Sciatic nerve (tissue), 2 donors: ENCODE measurements at regions of chr19 and their contacts with region 1.

Region 1: DNA sequence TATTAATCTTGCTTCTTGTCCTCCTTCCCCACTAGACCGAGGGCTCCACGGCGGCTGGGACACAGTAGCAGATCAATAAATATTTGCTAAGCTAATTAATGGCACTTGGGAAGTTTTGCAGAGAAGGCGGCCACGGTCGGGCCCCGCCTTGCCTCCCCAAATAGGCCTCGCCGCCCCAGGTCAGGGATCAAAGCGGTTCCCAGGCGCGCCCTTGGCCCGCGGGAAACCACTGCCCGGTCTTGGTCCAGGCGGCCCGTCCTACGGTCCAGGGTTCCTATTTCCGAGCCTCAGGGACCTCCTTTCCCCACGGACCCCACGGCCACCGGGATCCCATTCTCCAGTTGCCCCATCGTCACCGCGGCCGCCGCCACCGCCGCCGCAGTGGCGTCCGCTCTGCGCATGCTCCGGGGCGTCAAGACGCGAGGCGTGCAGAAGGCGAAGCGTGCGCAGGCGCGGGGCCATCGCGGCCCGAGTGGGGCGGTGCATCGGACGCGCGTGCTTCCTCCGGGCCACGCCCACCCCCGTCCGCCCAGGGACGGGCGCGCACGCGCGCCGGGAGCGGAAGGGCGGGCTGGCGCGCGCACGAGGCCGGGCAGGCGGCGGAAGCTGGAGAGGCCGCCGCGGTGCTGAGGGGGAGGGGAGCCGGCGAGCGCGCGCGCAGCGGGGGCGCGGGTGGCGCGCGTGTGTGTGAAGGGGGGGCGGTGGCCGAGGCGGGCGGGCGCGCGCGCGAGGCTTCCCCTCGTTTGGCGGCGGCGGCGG is at the start of gene SMARCA4:
- DNase-seq: peak; percentile 99
- ATAC-seq: peak; percentile 98
- total RNA-seq, gene SMARCA4: 77.8 TPM

Region 2: GRCh38 chr19:11137542-11138384 is 177.3 kb after region 1 on chr19:
- intact Hi-C with region 1: loop called (anchors 1 kb)
- DNase-seq: peak; percentile 92
- ATAC-seq: peak; percentile 79